ENCODE measurements at regions of chr11 and their contacts with region 1.

Region 1: DNA sequence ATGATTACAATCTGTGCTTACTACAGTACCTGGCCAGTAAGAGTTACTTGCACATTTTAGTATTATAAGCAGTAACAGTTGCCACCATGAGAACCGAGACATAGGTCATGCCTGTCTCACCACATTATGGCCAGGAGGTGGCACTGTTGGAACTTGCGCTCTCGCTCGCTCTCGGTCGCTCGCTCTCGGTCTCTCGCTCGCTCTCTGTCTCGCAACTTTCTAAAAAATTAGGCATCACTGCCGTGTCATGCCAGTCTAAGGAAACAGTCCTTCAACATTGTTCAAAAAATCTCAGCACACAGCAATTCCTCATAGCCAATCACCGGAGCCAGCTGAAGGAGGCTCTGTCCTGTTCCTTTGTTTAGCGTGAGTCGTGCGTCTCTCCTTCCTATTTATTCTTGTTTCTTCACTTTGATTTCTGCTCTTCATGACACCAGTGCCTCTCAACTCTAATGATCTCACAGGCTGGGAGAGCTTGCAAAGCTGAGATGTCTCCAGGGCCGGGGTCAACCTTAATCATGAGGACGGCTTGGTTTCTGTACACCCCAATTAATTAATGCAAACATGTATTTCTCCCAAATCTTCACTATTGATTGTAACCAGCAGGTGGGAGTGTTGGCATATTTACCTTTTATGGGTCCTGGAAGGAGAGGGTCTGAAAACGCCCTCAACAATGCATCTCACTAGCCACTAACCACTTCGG is 6.3 kb upstream of the ADAMTS8 start:
- DNase-seq: peak; percentile 86
- ATAC-seq: peak; percentile 93

Region 2: DNA sequence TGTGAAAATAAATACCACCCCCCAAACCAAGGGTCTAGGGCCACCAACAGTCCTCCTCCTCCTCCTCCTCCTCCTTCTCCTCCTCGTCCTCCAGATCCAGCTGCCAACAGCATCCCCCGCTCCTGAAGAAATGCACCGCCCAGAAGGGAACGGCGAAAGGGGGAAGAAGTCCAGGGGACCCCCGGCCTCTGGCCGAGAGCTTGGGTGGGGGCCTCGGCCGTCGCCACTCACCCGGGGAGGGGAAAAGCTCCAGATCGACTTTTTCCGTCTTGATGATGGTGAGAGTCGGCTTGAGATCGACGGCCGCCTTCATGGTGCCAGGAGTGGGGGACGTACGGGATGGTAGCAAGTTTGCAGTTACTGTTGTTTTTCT is 1913.0 kb before region 1 on chr11:
- intact Hi-C with region 1: no loop called
- DNase-seq: peak; percentile 67
- ATAC-seq: peak; percentile 9

Region 3: GRCh38 chr11:129237880-129238638 is 1196.6 kb before region 1 on chr11:
- intact Hi-C with region 1: no loop called
- DNase-seq: no peak
- ATAC-seq: no peak

Region 4: GRCh38 chr11:129728575-129728974 is 706.1 kb before region 1 on chr11:
- intact Hi-C with region 1: no loop called
- DNase-seq: no peak
- ATAC-seq: no peak

Region 5: DNA sequence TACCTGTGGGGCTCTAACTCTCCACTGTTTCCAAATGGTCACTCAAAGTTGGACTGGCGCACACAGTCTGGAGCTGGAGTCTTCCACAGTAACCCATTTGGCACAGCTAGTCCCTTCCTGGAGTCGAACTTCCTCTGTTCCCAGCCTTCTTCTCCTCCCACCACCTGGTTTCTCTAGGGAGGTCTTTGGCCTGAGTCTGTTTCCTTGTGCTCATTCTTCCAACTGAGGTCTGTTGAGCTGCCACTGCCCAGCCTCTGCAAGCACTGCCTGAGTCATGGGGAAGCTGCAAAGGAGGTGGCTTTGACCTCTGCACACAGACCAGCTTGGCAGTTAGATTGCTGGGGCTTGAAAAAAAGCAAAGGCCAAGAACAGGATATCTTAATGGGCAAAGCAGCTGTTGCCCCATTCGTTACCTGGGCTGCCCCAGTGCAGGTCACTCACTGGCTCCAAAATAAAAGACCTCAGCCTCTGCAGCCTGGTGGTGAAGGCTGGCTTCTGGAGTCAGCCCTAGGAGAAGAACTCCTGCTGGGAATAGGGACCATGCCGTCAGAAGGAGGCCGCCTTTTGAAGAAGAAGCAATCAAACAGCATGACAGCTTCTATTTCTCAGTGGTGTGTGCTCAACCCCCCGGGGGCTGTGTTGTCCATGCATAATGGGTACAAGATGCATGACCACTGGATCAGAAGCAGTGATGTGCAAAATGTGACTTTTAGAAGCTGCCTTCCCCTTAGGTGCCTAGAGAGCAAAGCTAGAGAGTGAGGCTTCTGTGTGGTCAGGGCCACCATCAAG is 16.8 kb after region 1 on chr11:
- intact Hi-C with region 1: no loop called
- DNase-seq: no peak
- ATAC-seq: peak; percentile 44

Region 6: DNA sequence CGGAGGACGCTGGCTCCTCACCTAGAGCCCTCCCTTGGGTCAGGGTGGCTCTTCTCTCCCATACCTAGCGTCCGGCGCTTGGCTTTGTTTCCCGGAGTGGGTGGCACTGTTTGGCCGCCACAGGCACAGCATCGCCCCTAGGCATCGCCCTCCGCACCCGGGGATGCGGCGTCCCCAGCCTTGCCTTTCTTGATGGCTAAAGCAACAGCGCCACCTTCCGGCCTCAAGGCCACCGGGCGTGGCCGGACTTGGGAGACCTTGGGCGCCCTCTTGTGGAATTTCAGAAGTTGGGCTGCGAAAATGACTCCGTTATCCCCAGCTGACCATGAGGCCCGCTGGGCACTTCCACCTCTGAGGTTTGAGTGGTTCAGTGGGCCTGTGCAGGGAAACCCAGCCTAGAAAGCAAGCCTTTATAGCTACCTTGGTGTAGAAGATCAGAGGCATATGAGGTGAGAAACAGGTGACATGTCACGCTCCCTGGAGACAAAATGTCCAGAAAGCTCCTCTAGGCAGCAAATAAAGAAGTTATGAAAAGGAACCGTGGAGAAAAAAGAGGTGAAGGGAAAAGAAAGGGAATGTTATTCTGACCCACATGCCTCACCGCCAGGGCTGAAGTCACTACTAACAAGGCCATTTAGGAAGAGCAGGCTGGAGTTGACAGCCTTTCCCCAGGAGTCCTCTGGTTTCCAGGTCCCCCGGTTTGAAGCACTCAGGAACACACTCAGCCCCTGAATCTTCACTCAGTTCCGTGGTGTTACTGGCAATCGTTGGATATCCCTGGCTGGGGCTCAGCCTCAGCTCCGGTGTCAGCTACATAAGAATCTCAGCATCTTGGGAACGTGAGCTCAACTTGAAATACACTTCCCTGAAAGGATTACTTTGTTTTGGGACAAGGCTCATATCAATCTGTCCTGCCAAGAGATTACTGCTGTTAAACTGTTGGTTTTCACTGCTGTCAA is 427.5 kb after region 1 on chr11:
- intact Hi-C with region 1: loop called (anchors 1 kb)
- DNase-seq: peak; percentile 96
- ATAC-seq: peak; percentile 90